ENCODE measurements at regions of chr20 and their contacts with region 1.

Region 1: GRCh38 chr20:14717134-14717999 is 380.0 kb upstream of the FLRT3 start:
- DNase-seq: no peak
- ATAC-seq: no peak
- H3K4me3 ChIP-seq: no peak overlapping the region
- H3K4me3 Mint-ChIP-seq: no peak overlapping the region
- H3K27ac ChIP-seq: no peak overlapping the region
- H3K27ac Mint-ChIP-seq: no peak overlapping the region
- H3K4me1 ChIP-seq: no peaks in the 10 kb centered on the region
- H3K4me1 Mint-ChIP-seq: no peaks in the 10 kb centered on the region
- H3K27me3 ChIP-seq: no peaks in the 10 kb centered on the region
- H3K27me3 Mint-ChIP-seq: no peaks in the 10 kb centered on the region
- CTCF ChIP-seq: no peak

Region 2: DNA sequence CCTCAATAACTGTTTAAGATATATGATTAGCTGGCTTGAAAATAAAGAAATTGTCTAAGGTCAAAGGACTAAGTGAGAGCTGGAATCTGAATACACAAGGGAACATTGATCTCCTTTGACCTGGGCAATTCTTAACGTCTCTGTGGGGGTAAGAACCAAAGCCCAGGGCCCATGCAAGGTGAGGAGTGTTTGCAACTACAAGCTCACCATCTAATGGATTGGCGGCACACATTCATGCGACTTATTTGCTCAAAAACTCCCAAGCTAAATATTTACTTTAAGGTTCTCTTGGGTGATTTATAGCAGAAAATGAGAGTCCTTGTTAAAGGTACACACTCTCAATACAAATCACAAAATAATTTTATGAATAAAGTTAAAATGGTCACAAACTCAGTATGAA is 12.0 kb after region 1 on chr20:
- CTCF ChIA-PET with region 1: no interaction called
- POLR2A ChIA-PET with region 1: no interaction called
- intact Hi-C with region 1: loop called in 1 of 2 experiments (anchors 1 kb)
- DNase-seq: no peak
- ATAC-seq: no peak
- H3K4me3 ChIP-seq: no peak overlapping the region
- H3K4me3 Mint-ChIP-seq: no peak overlapping the region
- H3K27ac ChIP-seq: no peak overlapping the region
- H3K27ac Mint-ChIP-seq: no peak overlapping the region
- H3K4me1 ChIP-seq: no peaks in the 10 kb centered on the region
- H3K4me1 Mint-ChIP-seq: no peaks in the 10 kb centered on the region
- H3K27me3 ChIP-seq: no peaks in the 10 kb centered on the region
- H3K27me3 Mint-ChIP-seq: no peaks in the 10 kb centered on the region
- CTCF ChIP-seq: no peak